ENCODE measurements at regions of chr1 and their contacts with region 1.

Region 1: GRCh38 chr1:221741711-221742554 is at the start of gene DUSP10:
- DNase-seq: peak; percentile 97 to 100 (median 100)
- H3K4me3 ChIP-seq: peak within 1 kb of the TSS; percentile 95 to 96
- H3K4me3 Mint-ChIP-seq: peak within 1 kb of the TSS in 3 of 8 donors; percentile 79 to 87 (median 86)
- H3K27ac ChIP-seq: peak within 1 kb of the TSS; percentile 98
- H3K27ac Mint-ChIP-seq: peak within 1 kb of the TSS in 4 of 7 donors; percentile 72 to 98 (median 92)
- H3K4me1 ChIP-seq: peaks cover 38% of the 10 kb centered on the region
- H3K4me1 Mint-ChIP-seq: peaks cover 0 to 36% (median 17%) of the 10 kb centered on the region in 4 donors
- H3K27me3 ChIP-seq: no peaks in the 10 kb centered on the region
- H3K27me3 Mint-ChIP-seq: no peaks in the 10 kb centered on the region
- total RNA-seq, gene DUSP10: 3.8 to 4.1 TPM

Region 2: DNA sequence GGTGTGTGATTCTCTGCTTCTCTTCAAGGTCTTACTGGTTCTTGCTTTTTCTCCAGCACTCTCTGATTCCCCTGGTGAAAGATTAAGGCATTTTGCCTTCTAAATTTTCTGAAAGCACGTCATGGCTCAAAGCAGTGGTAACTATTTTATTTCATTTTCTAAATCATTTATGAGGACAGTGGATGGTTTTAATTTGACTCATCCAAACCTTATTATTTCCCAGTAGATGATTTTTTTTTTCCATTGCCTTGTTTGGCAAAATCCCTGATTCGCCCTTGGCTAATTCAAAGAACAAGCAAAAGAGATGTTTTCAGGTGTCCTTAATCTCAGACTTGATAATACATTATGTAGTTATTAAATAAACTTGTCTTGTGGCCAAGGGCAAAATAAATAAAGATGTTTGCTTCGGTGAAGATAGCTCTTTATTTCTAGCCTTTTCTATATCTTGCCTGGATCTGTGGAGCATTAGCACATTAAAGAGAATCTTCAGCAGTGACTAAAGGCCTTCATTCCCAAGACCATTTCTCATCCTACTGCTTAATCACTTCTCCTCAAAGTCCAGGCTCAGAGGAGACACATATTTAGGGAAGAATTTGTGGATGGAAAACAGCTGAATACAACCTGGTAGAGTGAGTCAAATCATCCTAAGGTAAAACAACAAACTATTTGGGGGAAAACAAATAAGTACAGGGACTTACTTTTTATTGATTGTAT is 359.9 kb before region 1 on chr1:
- CTCF ChIA-PET with region 1: no interaction called
- POLR2A ChIA-PET with region 1: no interaction called
- intact Hi-C with region 1: no loop called
- DNase-seq: no peak
- H3K4me3 ChIP-seq: no peak overlapping the region
- H3K4me3 Mint-ChIP-seq: no peak overlapping the region
- H3K27ac ChIP-seq: no peak overlapping the region
- H3K27ac Mint-ChIP-seq: no peak overlapping the region
- H3K4me1 ChIP-seq: no peaks in the 10 kb centered on the region
- H3K4me1 Mint-ChIP-seq: no peaks in the 10 kb centered on the region
- H3K27me3 ChIP-seq: no peaks in the 10 kb centered on the region
- H3K27me3 Mint-ChIP-seq: peaks cover 2 to 4% of the 10 kb centered on the region in 2 donors

Region 3: GRCh38 chr1:221458447-221459156 is 283.3 kb before region 1 on chr1:
- CTCF ChIA-PET with region 1: no interaction called
- POLR2A ChIA-PET with region 1: no interaction called
- intact Hi-C with region 1: no loop called
- DNase-seq: no peak
- H3K4me3 ChIP-seq: no peak overlapping the region
- H3K4me3 Mint-ChIP-seq: no peak overlapping the region
- H3K27ac ChIP-seq: no peak overlapping the region
- H3K27ac Mint-ChIP-seq: no peak overlapping the region
- H3K4me1 ChIP-seq: no peaks in the 10 kb centered on the region
- H3K4me1 Mint-ChIP-seq: no peaks in the 10 kb centered on the region
- H3K27me3 ChIP-seq: no peaks in the 10 kb centered on the region
- H3K27me3 Mint-ChIP-seq: peaks cover 2 to 5% of the 10 kb centered on the region in 2 donors

Region 4: DNA sequence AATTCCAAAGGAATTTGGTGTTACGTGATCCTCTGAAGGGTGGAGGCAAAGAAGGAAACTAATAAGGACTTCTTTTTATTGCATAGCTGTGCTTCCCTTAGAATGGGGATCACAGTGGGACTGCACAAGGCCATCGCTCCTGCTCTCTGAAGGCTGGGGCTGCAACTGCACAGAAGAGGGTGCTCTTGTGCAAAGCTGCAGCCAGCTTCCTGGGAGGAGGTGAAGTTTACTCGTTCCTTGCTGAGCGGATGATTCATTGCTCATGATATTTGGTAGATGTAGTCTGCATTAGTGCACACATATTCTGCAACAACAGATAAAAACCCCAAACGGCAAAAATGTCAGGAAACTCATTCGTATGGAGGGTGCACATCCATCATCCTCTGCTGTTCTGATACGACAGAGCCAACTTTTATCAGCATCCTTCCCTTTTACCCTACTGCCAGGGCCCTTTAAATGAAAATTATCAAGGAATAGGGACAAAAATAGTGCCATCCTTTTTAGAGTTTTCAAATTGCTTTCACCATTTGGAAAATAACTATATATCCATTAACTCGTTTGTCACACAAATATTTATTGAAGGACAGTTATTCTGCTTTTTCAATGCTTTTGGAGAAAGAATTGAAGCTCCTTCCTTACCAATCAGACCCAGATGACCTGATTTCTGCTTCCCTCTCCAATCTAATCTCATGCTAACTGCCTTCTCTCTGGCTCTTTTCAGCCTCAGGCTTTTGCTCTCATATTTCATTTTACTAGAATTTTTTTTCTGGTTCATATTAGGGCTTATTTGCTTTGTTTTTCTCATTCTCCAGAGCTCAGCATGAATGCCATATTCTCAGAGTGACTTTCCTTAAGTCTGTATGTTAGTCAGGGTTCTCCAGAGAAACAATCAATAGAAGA is 263.6 kb before region 1 on chr1:
- CTCF ChIA-PET with region 1: interaction called, 10 read pairs
- POLR2A ChIA-PET with region 1: interaction called, 3 read pairs
- intact Hi-C with region 1: loop called (anchors 1 kb)
- DNase-seq: peak; percentile 38 to 47 (median 45)
- H3K4me3 ChIP-seq: no peak overlapping the region
- H3K4me3 Mint-ChIP-seq: no peak overlapping the region
- H3K27ac ChIP-seq: no peak overlapping the region
- H3K27ac Mint-ChIP-seq: no peak overlapping the region
- H3K4me1 ChIP-seq: no peaks in the 10 kb centered on the region
- H3K4me1 Mint-ChIP-seq: peaks cover 0 to 2% (median under 1%) of the 10 kb centered on the region in 4 donors
- H3K27me3 ChIP-seq: no peaks in the 10 kb centered on the region
- H3K27me3 Mint-ChIP-seq: peaks cover 0 to 7% of the 10 kb centered on the region in 2 donors

Region 5: GRCh38 chr1:221708987-221709386 is 32.9 kb before region 1 on chr1:
- CTCF ChIA-PET with region 1: interaction called, 18 read pairs
- POLR2A ChIA-PET with region 1: interaction called, 192 read pairs
- intact Hi-C with region 1: loop called (anchors 1 kb)
- DNase-seq: peak; percentile 64 to 94 (median 72)
- H3K4me3 ChIP-seq: no peak overlapping the region
- H3K4me3 Mint-ChIP-seq: peak overlapping the region in 3 of 8 donors; percentile 14 to 48 (median 41)
- H3K27ac ChIP-seq: peak overlapping the region; percentile 63
- H3K27ac Mint-ChIP-seq: peak overlapping the region; percentile 85 to 95 (median 94)
- H3K4me1 ChIP-seq: peaks cover 74% of the 10 kb centered on the region
- H3K4me1 Mint-ChIP-seq: peaks cover 45 to 81% (median 64%) of the 10 kb centered on the region in 4 donors
- H3K27me3 ChIP-seq: no peaks in the 10 kb centered on the region
- H3K27me3 Mint-ChIP-seq: no peaks in the 10 kb centered on the region

Region 6: GRCh38 chr1:221777431-221778072 is 35.6 kb after region 1 on chr1:
- CTCF ChIA-PET with region 1: interaction called, 14 read pairs
- POLR2A ChIA-PET with region 1: interaction called, 71 read pairs
- intact Hi-C with region 1: loop called (anchors 2 kb)
- DNase-seq: peak; percentile 54 to 80 (median 66)
- H3K4me3 ChIP-seq: no peak overlapping the region
- H3K4me3 Mint-ChIP-seq: peak overlapping the region; percentile 49 to 84 (median 68)
- H3K27ac ChIP-seq: peak overlapping the region; percentile 53
- H3K27ac Mint-ChIP-seq: peak overlapping the region; percentile 73 to 90 (median 86)
- H3K4me1 ChIP-seq: peaks cover 54% of the 10 kb centered on the region
- H3K4me1 Mint-ChIP-seq: peaks cover 42 to 71% (median 56%) of the 10 kb centered on the region in 4 donors
- H3K27me3 ChIP-seq: no peaks in the 10 kb centered on the region
- H3K27me3 Mint-ChIP-seq: no peaks in the 10 kb centered on the region

Region 7: GRCh38 chr1:221858818-221859611 is 117.1 kb after region 1 on chr1:
- CTCF ChIA-PET with region 1: no interaction called
- POLR2A ChIA-PET with region 1: no interaction called
- intact Hi-C with region 1: loop called (anchors 5 kb)
- DNase-seq: no peak
- H3K4me3 ChIP-seq: no peak overlapping the region
- H3K4me3 Mint-ChIP-seq: no peak overlapping the region
- H3K27ac ChIP-seq: no peak overlapping the region
- H3K27ac Mint-ChIP-seq: no peak overlapping the region
- H3K4me1 ChIP-seq: no peaks in the 10 kb centered on the region
- H3K4me1 Mint-ChIP-seq: no peaks in the 10 kb centered on the region
- H3K27me3 ChIP-seq: no peaks in the 10 kb centered on the region
- H3K27me3 Mint-ChIP-seq: no peaks in the 10 kb centered on the region

Region 8: DNA sequence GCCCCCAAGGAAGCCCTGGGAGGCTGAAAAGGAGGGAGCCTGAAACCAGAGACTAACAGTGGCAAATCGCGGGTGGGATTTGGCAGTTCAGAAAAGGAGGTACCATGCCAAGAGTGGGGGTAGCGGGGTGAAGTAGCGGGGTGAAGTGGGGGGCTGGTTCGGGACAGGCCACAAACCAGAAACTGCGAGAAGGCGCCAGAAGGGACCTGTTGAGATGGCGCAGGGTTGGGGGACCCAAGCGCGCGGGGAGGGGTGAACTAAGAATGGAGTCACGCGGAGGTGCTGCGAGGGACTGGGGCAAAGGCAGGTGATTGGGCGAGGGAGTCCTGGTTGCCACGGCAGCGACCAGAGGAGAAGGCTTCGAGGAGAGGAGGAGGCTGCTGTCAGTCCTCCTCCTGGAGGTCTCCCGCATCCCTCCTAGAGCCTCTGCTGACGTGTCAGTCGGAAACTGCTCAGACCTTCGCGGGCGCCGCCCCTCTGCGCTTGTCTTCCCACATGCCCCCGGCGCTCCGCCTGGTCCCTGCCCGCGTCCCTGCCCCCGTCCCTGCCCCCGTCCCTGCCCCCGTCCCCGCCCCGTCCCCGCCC is 875.5 kb after region 1 on chr1:
- CTCF ChIA-PET with region 1: no interaction called
- POLR2A ChIA-PET with region 1: no interaction called
- intact Hi-C with region 1: loop called (anchors 10 kb)
- DNase-seq: peak; percentile 89 to 99 (median 92)
- H3K4me3 ChIP-seq: peak overlapping the region; percentile 25 to 74
- H3K4me3 Mint-ChIP-seq: peak overlapping the region; percentile 89 to 97 (median 94)
- H3K27ac ChIP-seq: peak overlapping the region; percentile 68
- H3K27ac Mint-ChIP-seq: peak overlapping the region; percentile 90 to 98 (median 97)
- H3K4me1 ChIP-seq: peaks cover 22% of the 10 kb centered on the region
- H3K4me1 Mint-ChIP-seq: peaks cover 19 to 37% (median 28%) of the 10 kb centered on the region in 4 donors
- H3K27me3 ChIP-seq: no peaks in the 10 kb centered on the region
- H3K27me3 Mint-ChIP-seq: peaks cover 15 to 24% of the 10 kb centered on the region in 2 donors

Measured in CD4-positive, alpha-beta memory T cell (primary cell).